ENCODE measurements at regions of chr14 and their contacts with region 1.

Region 1: DNA sequence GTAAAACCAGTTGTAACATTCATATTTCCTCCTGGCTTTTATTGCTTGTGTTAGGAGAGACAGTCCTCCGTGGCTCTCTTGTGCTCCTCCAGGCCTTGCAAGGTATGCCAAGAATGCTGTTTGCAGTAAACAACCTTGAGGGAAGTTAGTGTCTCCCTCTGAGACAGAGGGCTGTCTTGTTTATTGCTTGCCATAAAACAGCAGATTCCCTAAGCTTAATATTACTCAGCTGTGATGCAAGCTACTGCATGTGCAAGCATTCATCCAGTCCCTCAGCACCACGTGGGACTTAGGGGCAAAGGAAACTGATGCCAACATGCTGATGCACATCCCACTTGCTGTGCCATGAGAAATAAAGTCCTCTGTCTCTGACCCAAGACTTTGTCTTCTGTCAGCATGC is 6.6 kb downstream of the POMT2 start:
- DNase-seq: no peak
- H3K4me3 Mint-ChIP-seq: no peak overlapping the region
- H3K27ac Mint-ChIP-seq: no peak overlapping the region
- H3K4me1 Mint-ChIP-seq: peaks cover 4% of the 10 kb centered on the region
- H3K27me3 Mint-ChIP-seq: no peaks in the 10 kb centered on the region

Region 2: GRCh38 chr14:77139540-77140358 is 174.3 kb before region 1 on chr14:
- CTCF ChIA-PET with region 1: interaction called, 24 read pairs
- DNase-seq: peak; percentile 61
- H3K4me3 Mint-ChIP-seq: no peak overlapping the region
- H3K27ac Mint-ChIP-seq: no peak overlapping the region
- H3K4me1 Mint-ChIP-seq: peaks cover 16% of the 10 kb centered on the region
- H3K27me3 Mint-ChIP-seq: peaks cover 94% of the 10 kb centered on the region

Region 3: DNA sequence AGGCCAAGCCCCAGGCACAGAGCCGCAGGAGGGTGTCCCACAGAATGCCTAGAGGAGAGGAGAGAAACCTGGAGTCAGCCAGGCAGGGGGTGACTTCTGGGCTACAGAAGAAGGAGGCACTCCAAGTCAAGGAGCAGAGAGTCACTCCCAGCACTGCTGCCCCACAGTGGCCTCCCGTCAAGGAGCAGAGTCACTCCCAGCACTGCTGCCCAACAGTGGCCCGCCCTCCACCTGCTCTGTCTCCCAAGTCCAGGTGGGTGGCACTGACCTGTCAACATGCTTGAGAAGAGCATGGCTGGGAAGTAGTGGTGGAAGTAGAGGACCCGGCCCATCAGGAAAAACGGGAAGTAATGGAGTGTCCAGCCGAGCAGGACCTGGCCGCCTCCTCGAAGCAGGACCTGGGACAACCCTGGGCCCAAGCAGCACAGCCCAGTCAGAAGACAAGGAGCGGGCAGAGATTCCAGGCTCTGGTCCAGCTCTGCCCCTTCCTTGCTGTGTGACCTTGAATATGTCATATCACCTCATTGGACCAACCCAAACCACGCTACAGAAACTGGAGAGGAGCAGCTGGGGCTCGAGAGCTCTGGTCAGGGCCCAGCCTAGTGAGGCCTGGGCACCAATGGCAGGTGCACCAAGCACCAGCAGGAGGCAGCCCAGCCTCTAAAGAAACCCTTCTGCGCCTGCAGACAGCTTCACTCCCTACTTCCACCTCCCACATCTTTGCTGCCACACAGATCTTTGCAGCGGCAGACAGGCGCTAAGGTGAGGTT is 35.4 kb before region 1 on chr14:
- CTCF ChIA-PET with region 1: interaction called, 11 read pairs
- DNase-seq: no peak
- H3K4me3 Mint-ChIP-seq: no peak overlapping the region
- H3K27ac Mint-ChIP-seq: no peak overlapping the region
- H3K4me1 Mint-ChIP-seq: no peaks in the 10 kb centered on the region
- H3K27me3 Mint-ChIP-seq: no peaks in the 10 kb centered on the region

Region 4: DNA sequence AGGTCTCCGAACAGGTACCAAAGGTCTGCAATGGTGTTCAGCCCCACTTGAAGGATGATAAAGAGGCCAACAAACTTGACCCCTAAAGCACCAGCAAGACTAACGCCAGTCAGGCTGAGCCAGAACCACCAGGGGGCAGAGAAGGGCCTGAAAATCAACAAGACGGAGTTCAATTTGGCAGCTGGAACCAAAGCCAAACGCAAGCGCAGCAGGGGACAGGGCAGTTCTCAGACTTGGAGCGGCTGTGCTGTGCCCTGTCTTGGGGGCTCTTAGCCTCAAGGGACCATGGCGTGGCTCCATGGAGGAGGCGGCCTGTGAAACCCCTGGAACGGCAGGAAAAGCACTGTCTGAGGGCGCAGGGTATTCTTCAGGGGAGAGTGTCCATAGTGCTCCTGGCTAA is 12.9 kb before region 1 on chr14:
- CTCF ChIA-PET with region 1: interaction called, 255 read pairs
- DNase-seq: peak; percentile 78
- H3K4me3 Mint-ChIP-seq: no peak overlapping the region
- H3K27ac Mint-ChIP-seq: no peak overlapping the region
- H3K4me1 Mint-ChIP-seq: peaks cover 8% of the 10 kb centered on the region
- H3K27me3 Mint-ChIP-seq: no peaks in the 10 kb centered on the region

Region 5: GRCh38 chr14:77329872-77330271 is 15.8 kb after region 1 on chr14:
- CTCF ChIA-PET with region 1: interaction called, 10 read pairs
- DNase-seq: no peak
- H3K4me3 Mint-ChIP-seq: no peak overlapping the region
- H3K27ac Mint-ChIP-seq: no peak overlapping the region
- H3K4me1 Mint-ChIP-seq: no peaks in the 10 kb centered on the region
- H3K27me3 Mint-ChIP-seq: no peaks in the 10 kb centered on the region

Region 6: GRCh38 chr14:77400219-77400618 is 86.2 kb after region 1 on chr14:
- CTCF ChIA-PET with region 1: no interaction called
- DNase-seq: no peak
- H3K4me3 Mint-ChIP-seq: no peak overlapping the region
- H3K27ac Mint-ChIP-seq: no peak overlapping the region
- H3K4me1 Mint-ChIP-seq: no peaks in the 10 kb centered on the region
- H3K27me3 Mint-ChIP-seq: no peaks in the 10 kb centered on the region

Region 7: DNA sequence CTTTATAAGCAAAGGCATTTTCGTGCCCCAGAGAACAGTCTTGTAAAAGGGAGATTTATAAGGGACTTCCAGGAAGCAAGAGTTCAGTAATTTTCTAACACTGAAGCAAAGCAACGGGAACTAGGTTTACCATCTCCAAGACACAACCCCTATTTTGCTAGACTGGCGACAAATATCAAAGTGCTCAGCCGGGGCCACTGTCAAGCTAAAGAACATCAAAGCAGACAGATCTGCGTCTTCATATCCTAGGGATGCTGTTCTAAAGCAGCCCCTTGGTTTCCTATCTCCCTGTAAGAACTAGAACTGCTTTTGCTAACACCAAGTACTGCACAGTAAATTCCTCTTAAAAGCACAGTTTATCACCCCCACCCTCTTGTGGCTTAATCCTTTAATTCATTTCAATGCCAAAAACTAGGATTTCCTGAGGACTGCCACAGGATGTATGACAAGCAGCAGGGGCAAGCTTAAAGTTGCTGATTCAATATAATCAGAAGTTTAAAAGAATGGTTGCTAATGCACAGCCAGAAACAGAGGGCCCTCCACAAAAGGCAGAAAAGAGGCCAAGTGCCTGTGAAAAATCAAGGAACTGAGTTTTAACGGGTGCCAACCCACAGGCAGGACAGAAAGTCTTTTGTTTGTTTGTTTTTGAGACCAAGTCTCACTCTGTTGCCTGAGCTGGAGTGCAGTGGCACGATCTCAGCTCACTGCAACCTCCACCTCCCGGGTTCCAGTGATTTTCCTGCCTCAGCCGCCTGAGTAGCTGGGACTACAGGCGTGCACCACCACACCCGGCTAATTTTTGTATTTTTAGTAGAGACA is 228.6 kb after region 1 on chr14:
- CTCF ChIA-PET with region 1: no interaction called
- DNase-seq: no peak
- H3K4me3 Mint-ChIP-seq: no peak overlapping the region
- H3K27ac Mint-ChIP-seq: peak overlapping the region; percentile 42
- H3K4me1 Mint-ChIP-seq: peaks cover 18% of the 10 kb centered on the region
- H3K27me3 Mint-ChIP-seq: no peaks in the 10 kb centered on the region

Measured in activated naive CD4-positive, alpha-beta T cell treated with anti-CD3 and anti-CD28 coated beads, Interleukin-2, amount 10 ng/mL, durations not matched to agents 7 days and 5 days (primary cell).